AG04450 (cell line): ENCODE measurements at regions of chr6 and their contacts with region 1.

Region 1: DNA sequence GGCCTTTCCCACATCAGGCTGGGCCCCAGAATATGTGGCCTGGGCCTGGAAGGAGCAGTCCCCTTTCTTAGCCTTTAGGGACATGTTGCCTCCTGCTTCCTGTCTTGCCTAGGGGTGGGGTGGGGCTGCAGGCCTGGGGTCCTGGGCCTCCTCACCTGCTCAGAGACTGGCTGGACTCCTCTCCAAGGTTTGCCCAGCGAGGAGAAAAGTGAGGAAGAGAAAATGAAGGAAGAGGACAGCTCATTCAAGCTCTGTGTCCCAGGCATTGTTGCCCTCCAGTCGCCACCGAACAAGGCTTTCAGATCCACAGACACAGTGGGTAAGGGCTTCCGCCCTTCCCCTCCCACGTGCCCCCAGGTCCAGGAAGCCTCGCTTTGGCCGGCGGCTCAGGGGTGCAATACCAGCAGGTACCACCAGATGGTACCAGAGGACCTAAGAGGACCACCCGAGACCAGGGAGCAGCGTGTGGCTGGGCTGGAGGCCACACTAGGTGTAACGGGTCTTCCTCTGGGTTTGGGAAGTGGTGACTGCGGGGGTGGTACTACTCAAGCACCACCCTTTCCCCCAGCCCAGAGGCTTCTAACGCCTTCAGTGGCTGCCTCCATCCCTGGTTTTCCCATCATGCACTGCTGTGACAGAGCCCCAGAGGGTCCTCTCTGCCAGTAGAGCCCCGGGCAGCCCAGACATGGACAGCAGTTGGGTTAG is 5.5 kb upstream of the BAK1 start:
- DNase-seq: no peak
- H3K4me3 ChIP-seq: peak overlapping the region; percentile 20; the same call in 1 of the 2 replicates
- H3K27ac ChIP-seq: no peak overlapping the region
- H3K27me3 ChIP-seq: no peaks in the 10 kb centered on the region
- CTCF ChIP-seq: peak; percentile 95

Region 2: GRCh38 chr6:33619166-33619840 is 33.7 kb after region 1 on chr6:
- CTCF ChIA-PET with region 1: interaction called, 11 read pairs
- POLR2A ChIA-PET with region 1: interaction called, 8 read pairs
- DNase-seq: no peak
- H3K4me3 ChIP-seq: no peak overlapping the region
- H3K27ac ChIP-seq: no peak overlapping the region
- H3K27me3 ChIP-seq: no peaks in the 10 kb centered on the region
- CTCF ChIP-seq: no peak

Region 3: DNA sequence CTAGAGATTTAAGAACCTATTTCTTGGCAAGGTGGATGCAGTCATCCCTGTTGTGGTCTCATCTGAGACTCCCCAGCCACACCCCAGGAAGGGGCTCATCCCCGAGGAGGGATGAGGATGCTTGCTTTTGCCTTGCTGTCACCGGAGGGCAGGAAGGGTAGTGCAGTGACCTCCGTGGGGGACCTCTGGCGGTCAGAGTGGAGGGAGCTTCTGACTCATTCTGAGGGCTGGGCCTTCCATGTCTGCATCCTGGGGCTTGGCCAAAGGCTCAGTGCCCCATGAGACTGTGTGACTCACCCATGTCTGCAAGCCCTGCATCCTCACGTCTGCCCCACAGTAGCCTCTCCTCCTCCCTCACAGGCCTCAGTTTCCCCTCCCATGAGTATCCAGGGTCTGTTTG is 87.3 kb after region 1 on chr6:
- CTCF ChIA-PET with region 1: interaction called, 23 read pairs
- POLR2A ChIA-PET with region 1: interaction called, 4 read pairs
- DNase-seq: peak; percentile 78
- H3K4me3 ChIP-seq: no peak overlapping the region
- H3K27ac ChIP-seq: no peak overlapping the region
- H3K27me3 ChIP-seq: no peaks in the 10 kb centered on the region
- CTCF ChIP-seq: peak; percentile 70

Region 4: GRCh38 chr6:33744001-33744848 is 158.7 kb after region 1 on chr6:
- CTCF ChIA-PET with region 1: interaction called, 11 read pairs
- POLR2A ChIA-PET with region 1: no interaction called
- DNase-seq: no peak
- H3K4me3 ChIP-seq: no peak overlapping the region
- H3K27ac ChIP-seq: no peak overlapping the region
- H3K27me3 ChIP-seq: peaks cover 22% of the 10 kb centered on the region
- CTCF ChIP-seq: peak; percentile 96